ENCODE measurements at regions of chr2 and their contacts with region 1.

Region 1: DNA sequence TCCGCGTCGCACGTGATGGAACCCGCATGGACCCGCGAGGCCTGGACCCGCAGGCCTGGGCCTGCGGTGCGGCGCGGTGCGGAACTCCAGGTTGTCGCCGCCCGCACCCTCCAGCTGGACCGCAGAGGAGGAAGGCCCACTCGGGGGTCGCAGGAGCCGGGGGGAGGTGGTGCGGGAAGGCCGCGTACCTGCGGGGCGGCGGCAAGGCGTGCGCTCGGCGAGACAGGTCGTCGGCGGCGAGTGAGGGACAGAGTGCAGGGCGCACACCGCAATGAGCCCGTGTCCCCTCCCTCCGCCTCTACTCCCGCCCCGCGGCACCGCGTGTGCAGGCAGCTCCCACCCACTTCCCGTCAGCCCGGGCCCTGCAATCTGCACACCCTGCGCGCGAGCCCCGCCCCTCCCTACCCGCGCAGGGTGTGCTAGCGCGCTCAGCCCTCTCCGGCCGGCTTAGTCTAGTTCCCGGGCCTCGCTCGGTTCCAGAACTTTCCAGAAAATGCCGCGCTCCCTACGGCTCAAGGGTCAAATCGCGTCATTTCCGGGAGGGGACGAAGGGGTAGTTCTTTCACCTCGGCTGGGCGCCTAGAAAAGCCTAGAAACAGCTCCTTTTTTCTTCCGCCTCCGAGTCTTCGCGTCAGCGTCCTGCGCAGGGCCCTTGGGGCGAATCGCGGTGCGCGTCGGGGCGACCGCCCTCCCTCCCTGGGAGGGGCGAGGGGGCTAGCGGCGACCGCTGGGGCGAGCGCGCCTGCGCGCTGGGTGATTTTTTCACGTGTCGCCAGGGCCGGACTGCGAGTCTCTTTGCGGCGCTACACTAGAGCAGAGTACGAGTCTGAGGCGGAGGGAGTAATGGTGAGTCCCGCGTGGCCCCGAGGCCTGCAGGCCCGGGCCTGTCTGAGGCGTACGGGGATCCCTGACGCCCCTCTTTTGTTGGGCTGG is at the starts of genes HSPD1 and HSPE1:
- DNase-seq: peak; percentile 97
- ATAC-seq: peak; percentile 88
- H3K4me3 ChIP-seq: peak within 1 kb of the TSS; percentile 88
- H3K27ac ChIP-seq: peak within 1 kb of the TSS; percentile 91
- H3K4me1 ChIP-seq: peaks cover 13% of the 10 kb centered on the region
- H3K27me3 ChIP-seq: no peaks in the 10 kb centered on the region
- CTCF ChIP-seq: no peak
- EP300 ChIP-seq: peak in 1 of 2 experiments; percentile 98; a peak in 2 of 4 replicates
- POLR2A ChIP-seq: peak; percentile 96
- RAD21 ChIP-seq: no peak
- polyA plus RNA-seq, gene HSPD1: 659 to 997 TPM
- polyA plus RNA-seq, gene HSPE1: 872 to 988 TPM

Region 2: GRCh38 chr2:197378494-197379307 is 121.2 kb before region 1 on chr2:
- CTCF ChIA-PET with region 1: no interaction called
- POLR2A ChIA-PET with region 1: interaction called, 11 read pairs
- RAD21 ChIA-PET with region 1: interaction called, 4 read pairs
- SMC1A ChIA-PET with region 1: no interaction called
- in situ Hi-C with region 1: no loop called
- intact Hi-C with region 1: no loop called
- DNase-seq: no peak
- ATAC-seq: peak; percentile 80
- H3K4me3 ChIP-seq: no peak overlapping the region
- H3K27ac ChIP-seq: no peak overlapping the region
- H3K4me1 ChIP-seq: peaks cover 12% of the 10 kb centered on the region
- H3K27me3 ChIP-seq: no peaks in the 10 kb centered on the region; a peak in 1 of 4 replicates
- CTCF ChIP-seq: peak; percentile 64 to 80 (median 80)
- EP300 ChIP-seq: no peak
- POLR2A ChIP-seq: no peak
- RAD21 ChIP-seq: peak; percentile 99

Region 3: GRCh38 chr2:197434541-197435513 is 65.0 kb before region 1 on chr2 and contains the start of gene SF3B1:
- CTCF ChIA-PET with region 1: interaction called, 4 read pairs
- POLR2A ChIA-PET with region 1: interaction called, 45 read pairs
- RAD21 ChIA-PET with region 1: interaction called, 5 read pairs
- SMC1A ChIA-PET with region 1: interaction called, 9 read pairs
- in situ Hi-C with region 1: no loop called
- intact Hi-C with region 1: loop called (anchors 1 kb)
- DNase-seq: peak; percentile 95
- ATAC-seq: peak; percentile 91
- H3K4me3 ChIP-seq: peak within 1 kb of the TSS; percentile 92
- H3K27ac ChIP-seq: peak within 1 kb of the TSS; percentile 99
- H3K4me1 ChIP-seq: peaks cover 4% of the 10 kb centered on the region; the same call in 1 of the 2 replicates
- H3K27me3 ChIP-seq: no peaks in the 10 kb centered on the region
- CTCF ChIP-seq: no peak
- EP300 ChIP-seq: peak in 1 of 2 experiments; percentile 51; a peak in 1 of 4 replicates
- POLR2A ChIP-seq: peak; percentile 93
- RAD21 ChIP-seq: no peak
- polyA plus RNA-seq, gene SF3B1: 163 to 170 TPM

Region 4: DNA sequence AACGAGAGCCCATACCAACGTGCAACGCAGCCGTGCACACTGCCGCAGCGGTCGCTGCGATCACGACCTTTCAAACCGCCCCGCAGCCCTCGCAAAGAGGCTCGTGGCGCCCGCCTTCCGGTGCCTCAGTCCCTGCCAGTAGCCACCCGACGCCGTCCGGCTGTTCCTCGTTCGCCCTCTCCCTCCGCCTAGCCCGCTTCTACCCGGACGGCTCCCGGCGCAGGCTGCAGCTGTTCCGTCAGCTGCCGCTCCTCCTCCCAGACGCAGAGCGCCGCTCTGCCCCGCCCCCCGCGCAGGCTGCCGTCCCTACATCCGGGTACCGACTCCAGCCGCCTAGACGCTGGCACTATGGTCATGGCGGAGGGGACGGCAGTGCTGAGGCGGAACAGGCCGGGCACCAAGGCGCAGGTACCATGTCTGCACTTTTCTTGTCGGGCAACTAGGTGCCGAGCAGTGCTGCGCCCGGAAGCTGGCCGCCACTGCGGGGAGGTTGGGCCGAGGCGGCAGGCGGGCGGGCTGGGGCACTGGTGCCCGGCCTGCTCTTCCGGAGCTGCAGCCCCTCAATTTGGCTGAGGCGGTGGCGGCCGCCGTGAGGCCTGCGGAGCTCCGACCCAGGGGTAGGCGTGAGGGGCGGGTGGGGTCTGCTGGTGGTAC is 16.0 kb after region 1 on chr2 and contains the start of gene MOB4:
- CTCF ChIA-PET with region 1: interaction called, 5 read pairs
- POLR2A ChIA-PET with region 1: interaction called, 156 read pairs
- RAD21 ChIA-PET with region 1: interaction called, 47 read pairs
- SMC1A ChIA-PET with region 1: interaction called, 34 read pairs
- in situ Hi-C with region 1: no loop called
- intact Hi-C with region 1: loop called (anchors 1 kb)
- DNase-seq: peak; percentile 82
- ATAC-seq: peak; percentile 95
- H3K4me3 ChIP-seq: peak within 1 kb of the TSS; percentile 99
- H3K27ac ChIP-seq: peak within 1 kb of the TSS; percentile 95
- H3K4me1 ChIP-seq: peaks cover 7% of the 10 kb centered on the region
- H3K27me3 ChIP-seq: no peaks in the 10 kb centered on the region
- CTCF ChIP-seq: no peak
- EP300 ChIP-seq: peak in 1 of 2 experiments; percentile 99; a peak in 2 of 4 replicates
- POLR2A ChIP-seq: peak; percentile 98
- RAD21 ChIP-seq: no peak
- polyA plus RNA-seq, gene MOB4: 40.6 to 43.4 TPM

Region 5: DNA sequence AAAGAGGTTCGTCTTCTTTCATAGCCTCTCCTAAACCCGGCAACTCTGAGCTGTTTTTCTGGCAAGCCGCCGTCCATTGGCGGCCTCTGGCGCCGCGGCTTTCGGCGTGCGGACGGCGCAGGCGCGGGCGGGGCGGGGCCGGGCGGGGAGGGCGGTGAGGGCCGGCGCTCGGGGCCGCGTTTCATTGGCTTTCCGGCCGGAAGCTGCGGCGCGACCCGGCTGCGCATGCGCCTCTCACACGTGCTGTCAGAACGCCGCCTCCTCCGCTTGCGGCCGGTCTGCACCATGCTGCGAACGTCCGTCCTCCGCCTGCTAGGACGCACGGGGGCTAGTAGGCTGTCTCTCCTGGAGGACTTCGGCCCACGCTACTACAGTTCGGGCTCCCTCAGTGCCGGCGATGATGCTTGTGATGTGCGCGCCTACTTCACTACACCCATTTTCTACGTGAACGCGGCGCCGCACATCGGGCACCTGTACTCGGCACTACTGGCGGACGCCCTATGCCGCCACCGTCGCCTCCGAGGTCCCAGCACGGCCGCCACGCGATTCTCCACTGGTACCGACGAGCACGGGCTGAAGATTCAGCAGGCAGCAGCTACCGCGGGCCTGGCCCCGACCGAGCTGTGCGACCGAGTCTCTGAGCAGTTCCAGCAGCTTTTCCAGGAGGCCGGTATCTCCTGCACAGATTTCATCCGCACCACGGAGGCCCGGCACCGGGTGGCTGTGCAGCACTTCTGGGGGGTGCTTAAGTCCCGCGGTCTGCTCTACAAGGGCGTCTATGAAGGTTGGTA is 205.5 kb after region 1 on chr2 and contains the start of gene MARS2:
- CTCF ChIA-PET with region 1: interaction called, 5 read pairs
- POLR2A ChIA-PET with region 1: interaction called, 24 read pairs
- RAD21 ChIA-PET with region 1: interaction called, 22 read pairs
- SMC1A ChIA-PET with region 1: interaction called, 8 read pairs
- in situ Hi-C with region 1: no loop called
- intact Hi-C with region 1: loop called (anchors 2 kb)
- DNase-seq: peak; percentile 68
- ATAC-seq: peak; percentile 86
- H3K4me3 ChIP-seq: peak within 1 kb of the TSS; percentile 81
- H3K27ac ChIP-seq: peak within 1 kb of the TSS; percentile 61
- H3K4me1 ChIP-seq: peaks cover 5% of the 10 kb centered on the region
- H3K27me3 ChIP-seq: no peaks in the 10 kb centered on the region
- CTCF ChIP-seq: 0 out of 6 replicates have a peak, but pooled peaks of 1 of the 3 experiments have one; percentile 4
- EP300 ChIP-seq: 0 out of 4 replicates have a peak, but pooled peaks of 1 of the 2 experiments have one; percentile 19
- POLR2A ChIP-seq: peak; percentile 98
- RAD21 ChIP-seq: no peak
- polyA plus RNA-seq, gene MARS2: 4.0 to 6.9 TPM